Spleen (tissue), 13 donors: ENCODE measurements at regions of chr4 and their contacts with region 1.

Region 1: GRCh38 chr4:5979976-5980375 is 38.3 kb downstream of the C4orf50 start:
- DNase-seq: no peak
- H3K4me3 ChIP-seq: no peak overlapping the region
- H3K27ac ChIP-seq: no peak overlapping the region
- H3K4me1 ChIP-seq: no peaks in the 10 kb centered on the region
- H3K27me3 ChIP-seq: peaks cover 0 to 56% (median 8%) of the 10 kb centered on the region in 7 donors
- CTCF ChIP-seq: peak in 6 of 11 experiments; percentile 12 to 41 (median 33)
- POLR2A ChIP-seq: no peak

Region 2: DNA sequence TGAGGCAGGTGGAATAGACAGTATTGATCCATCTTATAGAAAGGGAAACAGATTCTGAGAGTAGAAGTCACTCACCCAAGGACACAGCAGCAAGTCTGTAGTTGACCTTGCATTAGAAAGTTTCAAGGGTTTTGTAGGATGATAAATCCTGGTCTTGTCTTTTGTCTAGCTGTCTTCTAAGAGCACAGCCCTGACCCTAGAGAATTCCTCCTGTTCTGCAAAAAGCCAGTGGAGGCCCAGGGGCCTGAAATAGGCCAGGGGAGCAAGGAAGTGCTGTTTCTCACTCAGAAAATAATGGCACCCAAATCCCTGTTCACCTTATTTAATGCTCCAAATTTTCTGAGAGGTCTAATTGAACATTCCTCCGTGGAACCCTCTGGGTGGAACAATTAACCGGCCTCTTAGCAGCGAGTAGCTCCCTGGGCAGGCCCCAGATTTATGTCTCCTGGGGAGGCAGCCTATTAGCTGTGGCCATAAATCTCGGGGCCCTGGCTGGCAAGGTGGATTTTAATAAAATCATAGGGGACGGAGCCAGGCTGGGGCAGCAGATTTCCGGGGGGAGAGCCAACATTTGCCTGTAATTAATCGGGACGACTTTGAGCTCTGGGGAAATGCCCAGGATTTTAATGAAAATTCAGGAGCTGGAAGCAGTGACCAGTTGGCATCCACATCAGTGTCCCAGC is 1169.7 kb before region 1 on chr4:
- intact Hi-C with region 1: no loop called
- DNase-seq: no peak
- H3K4me3 ChIP-seq: no peak overlapping the region
- H3K27ac ChIP-seq: no peak overlapping the region
- H3K4me1 ChIP-seq: no peaks in the 10 kb centered on the region
- H3K27me3 ChIP-seq: no peaks in the 10 kb centered on the region
- CTCF ChIP-seq: no peak
- POLR2A ChIP-seq: no peak

Region 3: GRCh38 chr4:5824635-5825034 is 155.3 kb before region 1 on chr4:
- intact Hi-C with region 1: loop called (anchors 10 kb)
- DNase-seq: no peak
- H3K4me3 ChIP-seq: no peak overlapping the region
- H3K27ac ChIP-seq: no peak overlapping the region
- H3K4me1 ChIP-seq: peaks cover 0 to 17% (median 7%) of the 10 kb centered on the region in 6 donors
- H3K27me3 ChIP-seq: peaks cover 0 to 26% (median 0%) of the 10 kb centered on the region in 7 donors
- CTCF ChIP-seq: peak in 4 of 11 experiments; percentile 9 to 46 (median 26)
- POLR2A ChIP-seq: no peak